PC-9 (cell line): ENCODE measurements at regions of chr11 and their contacts with region 1.

Region 1: DNA sequence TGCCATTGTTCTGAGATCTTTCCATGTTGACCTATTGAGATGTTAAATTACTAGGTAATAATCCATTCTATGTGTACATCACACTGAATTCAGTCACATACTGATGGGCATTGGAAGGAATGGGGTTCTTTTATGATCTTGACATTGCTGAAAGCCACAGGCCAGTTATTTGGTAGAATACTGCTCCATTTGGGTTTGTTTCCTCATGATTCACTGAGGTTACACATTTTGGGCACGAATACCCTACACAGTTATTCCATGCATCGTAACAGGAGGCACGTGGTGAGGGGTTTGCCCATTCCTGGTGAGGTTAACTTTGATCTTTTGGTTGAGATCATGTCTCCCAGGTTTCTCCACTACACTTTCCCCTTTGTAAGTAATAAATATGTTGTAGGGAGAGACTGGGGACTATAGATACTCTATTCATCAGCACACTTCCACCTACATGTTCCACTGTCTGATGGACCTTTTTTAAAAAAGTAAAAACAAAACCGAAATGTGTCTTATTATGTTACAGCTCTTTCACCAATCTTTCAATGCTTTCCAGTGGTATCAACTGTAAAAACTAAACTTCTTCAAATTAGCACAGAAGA is 12.0 kb upstream of the FOLR1 start:
- DNase-seq: no peak
- H3K4me3 ChIP-seq: no peak overlapping the region
- H3K27ac ChIP-seq: no peak overlapping the region
- H3K4me1 ChIP-seq: no peaks in the 10 kb centered on the region
- H3K27me3 ChIP-seq: 0 out of 2 replicates have a peak, but pooled peaks cover 3% of the 10 kb centered on the region
- CTCF ChIP-seq: no peak

Region 2: GRCh38 chr11:71962428-71963038 is 217.4 kb before region 1 on chr11:
- CTCF ChIA-PET with region 1: interaction called, 13 read pairs
- POLR2A ChIA-PET with region 1: no interaction called
- intact Hi-C with region 1: no loop called
- DNase-seq: no peak
- H3K4me3 ChIP-seq: no peak overlapping the region
- H3K27ac ChIP-seq: peak overlapping the region; percentile 73
- H3K4me1 ChIP-seq: peaks cover 10% of the 10 kb centered on the region
- H3K27me3 ChIP-seq: no peaks in the 10 kb centered on the region
- CTCF ChIP-seq: no peak

Region 3: GRCh38 chr11:72102946-72103753 is 76.8 kb before region 1 on chr11 and contains the start of gene LAMTOR1:
- CTCF ChIA-PET with region 1: no interaction called
- POLR2A ChIA-PET with region 1: no interaction called
- intact Hi-C with region 1: loop called (anchors 5 kb)
- DNase-seq: peak; percentile 96 to 98
- H3K4me3 ChIP-seq: peak within 1 kb of the TSS; percentile 95
- H3K27ac ChIP-seq: peak within 1 kb of the TSS; percentile 71
- H3K4me1 ChIP-seq: peaks cover 13% of the 10 kb centered on the region
- H3K27me3 ChIP-seq: no peaks in the 10 kb centered on the region
- CTCF ChIP-seq: peak; percentile 68; the same call in 1 of the 2 replicates
- total RNA-seq, gene LAMTOR1: 94.6 and 107 TPM in 2 replicates

Region 4: GRCh38 chr11:72144807-72145560 is 34.9 kb before region 1 on chr11:
- CTCF ChIA-PET with region 1: no interaction called
- POLR2A ChIA-PET with region 1: interaction called, 4 read pairs
- intact Hi-C with region 1: loop called (anchors 1 kb)
- DNase-seq: peak; percentile 63 to 89
- H3K4me3 ChIP-seq: no peak overlapping the region
- H3K27ac ChIP-seq: peak overlapping the region; percentile 50
- H3K4me1 ChIP-seq: peaks cover 6% of the 10 kb centered on the region; the same call in 1 of the 2 replicates
- H3K27me3 ChIP-seq: no peaks in the 10 kb centered on the region
- CTCF ChIP-seq: no peak

Region 5: GRCh38 chr11:72203163-72203562 is 23.3 kb after region 1 on chr11:
- CTCF ChIA-PET with region 1: interaction called, 12 read pairs
- POLR2A ChIA-PET with region 1: no interaction called
- intact Hi-C with region 1: no loop called
- DNase-seq: peak in 1 of 2 experiments; percentile 48
- H3K4me3 ChIP-seq: no peak overlapping the region
- H3K27ac ChIP-seq: 0 out of 2 replicates have a peak overlapping the region, but pooled peaks have one; percentile 14
- H3K4me1 ChIP-seq: peaks cover 32% of the 10 kb centered on the region
- H3K27me3 ChIP-seq: no peaks in the 10 kb centered on the region
- CTCF ChIP-seq: no peak

Region 6: GRCh38 chr11:72222907-72223614 is 43.2 kb after region 1 on chr11:
- CTCF ChIA-PET with region 1: interaction called, 5 read pairs
- POLR2A ChIA-PET with region 1: interaction called, 15 read pairs
- intact Hi-C with region 1: loop called (anchors 2 kb)
- DNase-seq: peak; percentile 84 to 97
- H3K4me3 ChIP-seq: peak overlapping the region; percentile 97
- H3K27ac ChIP-seq: peak overlapping the region; percentile 50
- H3K4me1 ChIP-seq: peaks cover 23% of the 10 kb centered on the region
- H3K27me3 ChIP-seq: no peaks in the 10 kb centered on the region
- CTCF ChIP-seq: peak; percentile 68; the same call in 1 of the 2 replicates

Region 7: DNA sequence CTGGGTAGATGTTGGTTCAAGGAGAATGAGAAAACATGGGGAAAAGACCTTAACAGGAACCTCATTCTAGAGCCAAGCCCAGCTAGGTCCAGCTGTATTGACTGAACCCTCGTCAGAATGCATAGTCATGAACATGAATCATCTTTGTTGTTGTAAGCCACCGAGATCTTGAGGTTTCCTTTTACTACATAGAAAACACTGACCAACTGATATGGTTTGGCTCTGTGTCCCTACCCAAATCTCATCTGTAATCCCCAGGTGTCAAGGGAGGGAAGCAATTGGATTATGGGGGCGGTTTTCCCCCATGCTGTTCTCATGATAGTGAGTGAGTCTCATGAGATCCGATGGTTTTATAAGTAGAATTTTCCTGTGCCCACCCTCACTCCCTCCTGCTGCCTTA is 83.5 kb after region 1 on chr11:
- CTCF ChIA-PET with region 1: no interaction called
- POLR2A ChIA-PET with region 1: no interaction called
- intact Hi-C with region 1: no loop called
- DNase-seq: no peak
- H3K4me3 ChIP-seq: no peak overlapping the region
- H3K27ac ChIP-seq: no peak overlapping the region
- H3K4me1 ChIP-seq: no peaks in the 10 kb centered on the region
- H3K27me3 ChIP-seq: no peaks in the 10 kb centered on the region
- CTCF ChIP-seq: no peak

Region 8: DNA sequence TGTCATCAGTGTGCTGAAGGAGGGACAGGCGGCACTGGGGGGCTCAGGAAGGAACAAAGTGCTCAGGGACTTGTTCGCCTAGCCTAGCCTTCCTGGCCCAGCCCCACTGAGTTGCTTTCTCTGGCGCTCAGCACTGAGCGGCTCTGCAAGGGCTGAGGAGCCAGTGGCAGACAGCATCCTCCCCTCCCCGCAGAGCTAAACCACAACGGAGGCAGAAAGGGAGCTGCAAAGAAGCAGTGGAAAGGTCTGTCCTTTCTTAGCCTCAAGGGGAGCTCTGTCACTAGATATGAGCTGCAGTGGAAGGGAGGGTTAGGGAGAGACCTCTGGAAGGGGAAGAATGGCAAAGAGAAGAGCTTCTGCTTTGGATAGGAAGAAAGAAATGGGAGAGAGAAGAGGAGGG is 153.8 kb after region 1 on chr11:
- CTCF ChIA-PET with region 1: no interaction called
- POLR2A ChIA-PET with region 1: no interaction called
- intact Hi-C with region 1: no loop called
- DNase-seq: no peak
- H3K4me3 ChIP-seq: no peak overlapping the region
- H3K27ac ChIP-seq: no peak overlapping the region
- H3K4me1 ChIP-seq: no peaks in the 10 kb centered on the region
- H3K27me3 ChIP-seq: no peaks in the 10 kb centered on the region
- CTCF ChIP-seq: no peak

Region 9: DNA sequence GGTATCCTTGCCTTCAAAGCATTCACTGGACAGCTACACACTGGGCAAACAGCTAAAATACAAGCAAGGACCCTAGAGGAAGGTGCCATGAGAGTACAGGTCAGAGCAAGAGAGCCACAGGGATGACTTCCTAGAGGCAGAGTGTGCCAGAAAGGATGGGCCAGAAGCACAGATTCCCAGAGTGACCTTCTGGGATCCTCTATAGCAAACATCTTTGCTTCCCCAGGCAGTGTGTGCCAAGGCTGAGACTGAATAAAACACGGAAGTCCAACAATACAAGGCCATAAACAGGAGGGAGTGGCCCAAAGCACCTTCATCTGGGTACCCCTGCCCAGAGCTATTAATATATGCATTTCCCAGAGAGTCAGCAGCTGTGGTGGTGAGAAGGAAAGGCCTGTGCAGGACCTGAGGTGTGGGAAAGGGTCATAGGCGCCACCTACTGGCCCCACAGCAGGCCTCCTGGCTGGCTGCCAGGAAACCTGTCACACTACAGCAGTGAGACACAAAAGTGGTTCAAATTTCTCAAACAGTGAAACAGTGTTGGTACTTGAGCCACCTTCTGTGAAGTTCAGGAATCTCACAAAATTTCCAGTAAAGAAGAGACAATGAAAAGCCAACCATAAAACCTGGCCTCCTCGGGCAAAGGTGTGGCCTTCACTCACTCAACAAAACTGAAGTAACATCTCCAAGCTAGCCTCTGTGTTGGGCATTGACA is 234.2 kb after region 1 on chr11:
- CTCF ChIA-PET with region 1: no interaction called
- POLR2A ChIA-PET with region 1: no interaction called
- intact Hi-C with region 1: loop called (anchors 1 kb)
- DNase-seq: peak; percentile 73 to 89
- H3K4me3 ChIP-seq: no peak overlapping the region
- H3K27ac ChIP-seq: no peak overlapping the region
- H3K4me1 ChIP-seq: no peaks in the 10 kb centered on the region
- H3K27me3 ChIP-seq: no peaks in the 10 kb centered on the region
- CTCF ChIP-seq: peak; percentile 96

Region 10: GRCh38 chr11:74170694-74171629 is 1991.1 kb after region 1 on chr11 and contains the starts of genes C2CD3 and PPME1:
- CTCF ChIA-PET with region 1: no interaction called
- POLR2A ChIA-PET with region 1: no interaction called
- intact Hi-C with region 1: no loop called
- DNase-seq: peak; percentile 99 to 100
- H3K4me3 ChIP-seq: peak within 1 kb of the TSS; percentile 84
- H3K27ac ChIP-seq: peak within 1 kb of the TSS; percentile 73
- H3K4me1 ChIP-seq: peaks cover 40% of the 10 kb centered on the region
- H3K27me3 ChIP-seq: no peaks in the 10 kb centered on the region
- CTCF ChIP-seq: no peak; the same call in 1 of the 2 replicates
- total RNA-seq, gene C2CD3: 47.6 and 50.0 TPM in 2 replicates
- total RNA-seq, gene PPME1: 81.0 and 86.8 TPM in 2 replicates